CD4-positive, alpha-beta T cell (primary cell): ENCODE measurements at regions of chr14 and their contacts with region 1.

Region 1: GRCh38 chr14:35352266-35353233 is 52.0 kb downstream of the NFKBIA start:
- DNase-seq: no peak
- ATAC-seq: no peak
- H3K4me3 ChIP-seq: no peak overlapping the region
- H3K4me3 Mint-ChIP-seq: no peak overlapping the region
- H3K27ac ChIP-seq: no peak overlapping the region
- H3K27ac Mint-ChIP-seq: no peak overlapping the region
- H3K4me1 ChIP-seq: peaks cover 8% of the 10 kb centered on the region
- H3K4me1 Mint-ChIP-seq: peaks cover 24% of the 10 kb centered on the region
- H3K27me3 ChIP-seq: no peaks in the 10 kb centered on the region
- H3K27me3 Mint-ChIP-seq: peaks cover 4% of the 10 kb centered on the region
- CTCF ChIP-seq: no peak

Region 2: GRCh38 chr14:35174342-35174741 is 178.2 kb before region 1 on chr14:
- CTCF ChIA-PET with region 1: no interaction called
- POLR2A ChIA-PET with region 1: no interaction called
- intact Hi-C with region 1: no loop called
- DNase-seq: no peak
- ATAC-seq: no peak
- H3K4me3 ChIP-seq: no peak overlapping the region
- H3K4me3 Mint-ChIP-seq: no peak overlapping the region
- H3K27ac ChIP-seq: no peak overlapping the region
- H3K27ac Mint-ChIP-seq: no peak overlapping the region
- H3K4me1 ChIP-seq: no peaks in the 10 kb centered on the region
- H3K4me1 Mint-ChIP-seq: peaks cover 18% of the 10 kb centered on the region
- H3K27me3 ChIP-seq: no peaks in the 10 kb centered on the region
- H3K27me3 Mint-ChIP-seq: no peaks in the 10 kb centered on the region
- CTCF ChIP-seq: no peak

Region 3: GRCh38 chr14:35385042-35385839 is 32.7 kb after region 1 on chr14:
- CTCF ChIA-PET with region 1: no interaction called
- POLR2A ChIA-PET with region 1: no interaction called
- intact Hi-C with region 1: loop called in 1 of 2 experiments (anchors 5 kb)
- DNase-seq: no peak
- ATAC-seq: no peak
- H3K4me3 ChIP-seq: no peak overlapping the region
- H3K4me3 Mint-ChIP-seq: no peak overlapping the region
- H3K27ac ChIP-seq: no peak overlapping the region
- H3K27ac Mint-ChIP-seq: no peak overlapping the region
- H3K4me1 ChIP-seq: no peaks in the 10 kb centered on the region
- H3K4me1 Mint-ChIP-seq: no peaks in the 10 kb centered on the region
- H3K27me3 ChIP-seq: no peaks in the 10 kb centered on the region
- H3K27me3 Mint-ChIP-seq: no peaks in the 10 kb centered on the region
- CTCF ChIP-seq: no peak